Caco-2 (cell line): ENCODE measurements at regions of chr3 and their contacts with region 1.

Region 1: GRCh38 chr3:143001369-143002082 is at the start of gene U2SURP:
- DNase-seq: peak; percentile 95 to 97
- H3K4me3 ChIP-seq: peak within 1 kb of the TSS; percentile 96
- H3K4me3 Mint-ChIP-seq: peak within 1 kb of the TSS; percentile 98
- H3K27ac Mint-ChIP-seq: peak within 1 kb of the TSS; percentile 98
- H3K4me1 ChIP-seq: peaks cover 9% of the 10 kb centered on the region; the same call in 1 of the 2 replicates
- H3K4me1 Mint-ChIP-seq: peaks cover 18% of the 10 kb centered on the region
- H3K27me3 ChIP-seq: no peaks in the 10 kb centered on the region
- H3K27me3 Mint-ChIP-seq: no peaks in the 10 kb centered on the region
- CTCF ChIP-seq: no peak
- total RNA-seq, gene U2SURP: 125 and 131 TPM in 2 replicates

Region 2: GRCh38 chr3:142732066-142732465 is 269.5 kb before region 1 on chr3:
- CTCF ChIA-PET with region 1: no interaction called
- POLR2A ChIA-PET with region 1: interaction called, 10 read pairs
- intact Hi-C with region 1: no loop called
- DNase-seq: no peak
- H3K4me3 ChIP-seq: no peak overlapping the region
- H3K4me3 Mint-ChIP-seq: no peak overlapping the region
- H3K27ac Mint-ChIP-seq: no peak overlapping the region
- H3K4me1 ChIP-seq: no peaks in the 10 kb centered on the region
- H3K4me1 Mint-ChIP-seq: peaks cover 7% of the 10 kb centered on the region
- H3K27me3 ChIP-seq: no peaks in the 10 kb centered on the region
- H3K27me3 Mint-ChIP-seq: no peaks in the 10 kb centered on the region
- CTCF ChIP-seq: no peak

Region 3: DNA sequence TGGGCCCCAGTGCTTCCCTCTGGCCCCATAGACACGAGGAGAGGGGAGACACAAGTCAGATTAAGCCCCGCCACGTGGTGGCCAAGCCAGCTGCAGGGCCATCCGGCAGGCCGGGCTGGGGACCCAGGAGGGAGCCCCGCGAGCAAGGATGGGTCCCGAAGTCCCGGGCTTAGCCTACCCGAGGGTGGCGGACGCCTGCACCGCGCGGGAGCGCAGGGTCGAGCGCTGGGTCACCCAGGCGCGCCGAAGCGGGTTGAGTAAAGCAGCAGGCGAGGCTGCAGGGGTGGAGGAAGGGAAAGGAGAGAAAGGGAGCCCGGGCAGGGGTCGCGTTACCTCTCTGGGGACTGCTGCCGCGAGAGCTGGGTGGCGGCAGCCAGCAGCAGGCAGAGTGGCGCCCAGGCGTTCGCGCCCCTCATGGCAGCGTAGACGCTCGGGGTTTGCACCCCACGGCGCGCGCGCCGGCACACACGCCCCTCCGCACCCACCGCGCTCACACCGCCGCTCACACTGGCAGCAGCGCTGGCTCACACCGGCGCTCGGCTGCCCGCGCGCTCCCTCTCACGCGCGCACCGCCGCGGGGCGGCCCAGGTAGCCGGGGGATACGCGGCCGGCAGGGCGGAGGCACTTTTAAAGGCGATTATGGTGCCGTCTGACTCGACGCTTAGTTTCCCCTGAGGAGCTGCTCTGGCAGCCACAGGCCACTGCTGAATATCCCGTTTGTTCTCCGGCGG is 112.9 kb before region 1 on chr3 and contains the start of gene PCOLCE2:
- CTCF ChIA-PET with region 1: no interaction called
- POLR2A ChIA-PET with region 1: interaction called, 11 read pairs
- intact Hi-C with region 1: no loop called
- DNase-seq: peak in 1 of 2 experiments; percentile 46
- H3K4me3 ChIP-seq: peak within 1 kb of the TSS; percentile 55
- H3K4me3 Mint-ChIP-seq: peak within 1 kb of the TSS; percentile 79
- H3K27ac Mint-ChIP-seq: no peak within 1 kb of the TSS
- H3K4me1 ChIP-seq: no peaks in the 10 kb centered on the region
- H3K4me1 Mint-ChIP-seq: no peaks in the 10 kb centered on the region
- H3K27me3 ChIP-seq: no peaks in the 10 kb centered on the region
- H3K27me3 Mint-ChIP-seq: peaks cover 10% of the 10 kb centered on the region
- CTCF ChIP-seq: no peak
- total RNA-seq, gene PCOLCE2: 0.34 and 1.1 TPM in 2 replicates

Region 4: GRCh38 chr3:142902356-142902755 is 99.2 kb before region 1 on chr3:
- CTCF ChIA-PET with region 1: no interaction called
- POLR2A ChIA-PET with region 1: no interaction called
- intact Hi-C with region 1: no loop called
- DNase-seq: no peak
- H3K4me3 ChIP-seq: no peak overlapping the region
- H3K4me3 Mint-ChIP-seq: no peak overlapping the region
- H3K27ac Mint-ChIP-seq: no peak overlapping the region
- H3K4me1 ChIP-seq: no peaks in the 10 kb centered on the region
- H3K4me1 Mint-ChIP-seq: no peaks in the 10 kb centered on the region
- H3K27me3 ChIP-seq: no peaks in the 10 kb centered on the region
- H3K27me3 Mint-ChIP-seq: peaks cover 15% of the 10 kb centered on the region
- CTCF ChIP-seq: no peak

Region 5: GRCh38 chr3:143040261-143040879 is 38.8 kb after region 1 on chr3:
- CTCF ChIA-PET with region 1: interaction called, 3 read pairs
- POLR2A ChIA-PET with region 1: interaction called, 6 read pairs
- intact Hi-C with region 1: loop called (anchors 1 kb)
- DNase-seq: no peak
- H3K4me3 ChIP-seq: no peak overlapping the region
- H3K4me3 Mint-ChIP-seq: no peak overlapping the region
- H3K27ac Mint-ChIP-seq: no peak overlapping the region
- H3K4me1 ChIP-seq: peaks cover 21% of the 10 kb centered on the region
- H3K4me1 Mint-ChIP-seq: peaks cover 15% of the 10 kb centered on the region
- H3K27me3 ChIP-seq: no peaks in the 10 kb centered on the region
- H3K27me3 Mint-ChIP-seq: no peaks in the 10 kb centered on the region
- CTCF ChIP-seq: peak in 1 of 2 experiments; percentile 38